Panc1 (cell line): ENCODE measurements at regions of chr2 and their contacts with region 1.

Region 1: GRCh38 chr2:85545780-85546240 is 6.8 kb downstream of the MAT2A start:
- DNase-seq: no peak
- ATAC-seq: no peak; the same call in 1 of the 2 replicates
- H3K4me3 ChIP-seq: no peak overlapping the region
- H3K27ac ChIP-seq: peak overlapping the region; percentile 100
- H3K4me1 ChIP-seq: peaks cover 85% of the 10 kb centered on the region
- H3K27me3 ChIP-seq: no peaks in the 10 kb centered on the region
- CTCF ChIP-seq: no peak

Region 2: GRCh38 chr2:85288244-85288725 is 257.5 kb before region 1 on chr2:
- CTCF ChIA-PET with region 1: no interaction called
- POLR2A ChIA-PET with region 1: no interaction called
- in situ Hi-C with region 1: no loop called
- intact Hi-C with region 1: no loop called
- DNase-seq: no peak
- ATAC-seq: no peak
- H3K4me3 ChIP-seq: no peak overlapping the region
- H3K27ac ChIP-seq: no peak overlapping the region
- H3K4me1 ChIP-seq: peaks cover 10% of the 10 kb centered on the region; the same call in 1 of the 2 replicates
- H3K27me3 ChIP-seq: no peaks in the 10 kb centered on the region
- CTCF ChIP-seq: no peak

Region 3: DNA sequence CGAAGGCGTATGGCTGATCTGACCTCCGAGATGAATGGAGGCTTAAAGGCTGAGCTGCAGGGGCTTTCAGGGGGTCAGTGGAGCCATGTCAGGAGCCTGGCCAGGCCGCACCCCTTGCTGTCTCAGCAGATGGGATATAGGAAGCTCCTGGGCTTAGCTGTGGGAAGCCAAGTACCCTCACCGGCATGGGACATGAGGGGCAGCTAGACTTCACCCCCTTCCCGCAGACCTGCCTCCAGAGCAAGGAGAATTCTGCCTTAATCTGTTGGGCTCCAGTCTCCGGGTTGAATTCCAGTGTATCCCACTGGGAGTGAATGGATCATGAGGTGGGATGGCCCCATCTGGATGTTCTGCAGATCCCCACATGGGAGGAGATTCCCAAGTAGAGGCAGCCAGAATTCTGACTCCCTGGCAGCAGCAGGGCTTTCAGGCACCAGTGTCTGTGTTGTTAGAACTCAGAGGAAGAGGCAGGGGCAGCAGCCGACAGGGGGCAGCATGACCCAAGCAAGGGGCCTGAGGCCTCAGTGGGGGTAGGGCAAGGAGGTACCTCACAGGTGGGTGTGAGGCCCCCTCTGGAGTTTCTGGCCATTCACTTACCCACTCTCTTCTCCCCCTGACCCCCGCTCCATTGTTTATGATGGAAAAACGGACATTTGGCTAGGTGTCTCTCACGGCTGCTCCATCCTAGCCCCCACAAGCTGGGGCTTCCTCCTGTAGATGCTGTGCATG is 154.7 kb before region 1 on chr2:
- CTCF ChIA-PET with region 1: no interaction called
- POLR2A ChIA-PET with region 1: no interaction called
- in situ Hi-C with region 1: no loop called
- intact Hi-C with region 1: loop called (anchors 2 kb)
- DNase-seq: no peak
- ATAC-seq: peak; percentile 86
- H3K4me3 ChIP-seq: no peak overlapping the region
- H3K27ac ChIP-seq: no peak overlapping the region
- H3K4me1 ChIP-seq: no peaks in the 10 kb centered on the region
- H3K27me3 ChIP-seq: no peaks in the 10 kb centered on the region
- CTCF ChIP-seq: peak; percentile 94

Region 4: GRCh38 chr2:85470850-85471800 is 74.7 kb before region 1 on chr2:
- CTCF ChIA-PET with region 1: interaction called, 3 read pairs
- POLR2A ChIA-PET with region 1: interaction called, 10 read pairs
- in situ Hi-C with region 1: no loop called
- intact Hi-C with region 1: no loop called
- DNase-seq: no peak
- ATAC-seq: peak; percentile 49; the same call in 1 of the 2 replicates
- H3K4me3 ChIP-seq: no peak overlapping the region
- H3K27ac ChIP-seq: peak overlapping the region; percentile 75
- H3K4me1 ChIP-seq: peaks cover 26% of the 10 kb centered on the region
- H3K27me3 ChIP-seq: no peaks in the 10 kb centered on the region
- CTCF ChIP-seq: no peak